ENCODE measurements at regions of chr1 and their contacts with region 1.

Region 1: GRCh38 chr1:156659994-156660751 is 17.0 kb downstream of the NES start:
- DNase-seq: peak; percentile 98
- ATAC-seq: peak; percentile 70 to 83
- H3K4me3 ChIP-seq: peak overlapping the region; percentile 77
- H3K27ac ChIP-seq: peak overlapping the region; percentile 97
- H3K4me1 ChIP-seq: peaks cover 65% of the 10 kb centered on the region
- CTCF ChIP-seq: peak; percentile 99
- EP300 ChIP-seq: peak in 1 of 2 experiments; percentile 62; a peak in 2 of 5 replicates
- POLR2A ChIP-seq: peak; percentile 44; the same call in 1 of the 2 replicates
- RAD21 ChIP-seq: peak; percentile 78 to 91

Region 2: GRCh38 chr1:156641761-156642264 is 18.4 kb before region 1 on chr1 and contains the start of gene BCAN:
- CTCF ChIA-PET with region 1: interaction called, 58 read pairs
- POLR2A ChIA-PET with region 1: interaction called, 3 read pairs
- DNase-seq: no peak
- ATAC-seq: no peak
- H3K4me3 ChIP-seq: no peak within 1 kb of the TSS
- H3K27ac ChIP-seq: no peak within 1 kb of the TSS
- H3K4me1 ChIP-seq: no peaks in the 10 kb centered on the region
- CTCF ChIP-seq: no peak
- EP300 ChIP-seq: no peak
- POLR2A ChIP-seq: no peak
- RAD21 ChIP-seq: no peak
- polyA plus RNA-seq, gene BCAN: 0.12 TPM in 1 of 2 replicates, not detected in the other

Region 3: GRCh38 chr1:156677616-156678596 is 17.7 kb after region 1 on chr1:
- CTCF ChIA-PET with region 1: interaction called, 402 read pairs
- POLR2A ChIA-PET with region 1: interaction called, 4 read pairs
- DNase-seq: peak; percentile 72 to 85
- ATAC-seq: peak; percentile 72 to 84; a peak in 5 of 6 replicates
- H3K4me3 ChIP-seq: peak overlapping the region; percentile 30; the same call in 2 of the 3 replicates
- H3K27ac ChIP-seq: peak overlapping the region; percentile 68 to 75
- H3K4me1 ChIP-seq: peaks cover 13% of the 10 kb centered on the region
- CTCF ChIP-seq: peak; percentile 96
- EP300 ChIP-seq: no peak
- POLR2A ChIP-seq: no peak
- RAD21 ChIP-seq: peak; percentile 94 to 96

Region 4: GRCh38 chr1:156705918-156706656 is 45.9 kb after region 1 on chr1:
- CTCF ChIA-PET with region 1: interaction called, 30 read pairs
- POLR2A ChIA-PET with region 1: interaction called, 3 read pairs
- DNase-seq: peak; percentile 53 to 62
- ATAC-seq: peak; percentile 28 to 66; a peak in 4 of 6 replicates
- H3K4me3 ChIP-seq: peak overlapping the region; percentile 45
- H3K27ac ChIP-seq: peak overlapping the region; percentile 65 to 86; a peak in 5 of 6 replicates
- H3K4me1 ChIP-seq: peaks cover 61% of the 10 kb centered on the region
- CTCF ChIP-seq: peak; percentile 88
- EP300 ChIP-seq: no peak
- POLR2A ChIP-seq: no peak
- RAD21 ChIP-seq: peak; percentile 67 to 80

Region 5: DNA sequence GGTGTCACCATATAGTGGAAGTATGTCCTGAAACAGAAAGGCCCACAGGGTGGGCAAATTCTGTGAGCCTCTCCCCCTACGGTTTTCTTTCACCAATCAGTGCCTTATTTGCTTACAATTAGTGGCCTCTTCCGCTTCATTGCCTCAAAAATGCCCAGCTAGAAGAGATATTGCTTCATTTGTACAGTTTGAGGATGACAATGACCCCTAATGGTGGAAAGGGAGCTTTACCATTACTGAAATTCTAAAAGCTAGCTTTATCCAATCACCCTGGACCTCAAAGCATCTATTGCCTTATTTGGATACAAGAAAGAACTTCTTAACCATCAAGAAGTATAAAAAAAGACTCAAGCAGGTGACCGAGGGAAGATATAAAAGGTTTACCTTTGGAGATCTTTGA is 309.8 kb after region 1 on chr1:
- CTCF ChIA-PET with region 1: no interaction called
- POLR2A ChIA-PET with region 1: no interaction called
- DNase-seq: peak in 1 of 2 experiments; percentile 8
- ATAC-seq: peak; percentile 52 to 57; a peak in 3 of 6 replicates
- H3K4me3 ChIP-seq: no peak overlapping the region
- H3K27ac ChIP-seq: no peak overlapping the region
- H3K4me1 ChIP-seq: no peaks in the 10 kb centered on the region
- CTCF ChIP-seq: peak; percentile 11; the same call in 1 of the 3 replicates
- EP300 ChIP-seq: no peak
- POLR2A ChIP-seq: no peak
- RAD21 ChIP-seq: no peak

Measured in A549 (cell line).